ENCODE measurements at regions of chr7 and their contacts with region 1.

Region 1: DNA sequence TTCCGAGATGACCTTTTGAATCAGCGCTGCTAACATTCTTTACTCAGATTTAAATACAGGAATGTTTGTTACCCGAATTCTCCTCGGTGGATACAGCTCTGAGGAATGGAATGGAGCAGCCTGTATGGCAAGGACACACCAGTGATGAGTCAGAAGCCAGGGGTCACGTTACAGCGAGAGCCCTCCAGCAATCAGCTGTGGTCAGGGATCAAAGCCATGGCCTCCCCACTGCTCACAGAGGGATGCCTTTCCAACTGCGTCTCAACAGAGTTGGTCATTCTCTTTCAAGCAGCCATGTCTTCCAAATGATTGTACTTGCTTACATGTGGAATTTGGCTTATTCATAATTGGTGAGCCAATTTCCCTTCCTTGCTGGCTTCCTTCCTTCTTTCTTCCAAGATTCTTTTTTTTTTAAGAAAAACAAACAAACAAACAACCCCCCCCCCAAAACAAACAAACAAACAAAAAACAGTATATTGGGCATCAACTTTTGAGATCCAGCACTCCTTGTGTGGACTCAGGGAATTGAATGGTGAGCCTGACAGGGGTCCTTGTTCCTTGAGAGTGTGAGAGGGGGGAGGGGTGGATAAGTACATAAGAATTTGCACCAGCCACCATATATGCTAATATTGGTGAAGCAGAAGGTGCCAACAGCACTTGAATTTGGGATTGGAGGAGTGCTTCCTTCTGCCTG is 100.2 kb downstream of the ATXN7L1 start:
- DNase-seq: peak; percentile 100
- ATAC-seq: peak; percentile 99
- H3K4me3 ChIP-seq: no peak overlapping the region
- H3K27ac ChIP-seq: peak overlapping the region; percentile 84
- H3K4me1 ChIP-seq: peaks cover 22% of the 10 kb centered on the region
- H3K27me3 ChIP-seq: no peaks in the 10 kb centered on the region
- CTCF ChIP-seq: no peak
- POLR2A ChIP-seq: no peak
- RAD21 ChIP-seq: no peak; the same call in 1 of the 2 replicates

Region 2: DNA sequence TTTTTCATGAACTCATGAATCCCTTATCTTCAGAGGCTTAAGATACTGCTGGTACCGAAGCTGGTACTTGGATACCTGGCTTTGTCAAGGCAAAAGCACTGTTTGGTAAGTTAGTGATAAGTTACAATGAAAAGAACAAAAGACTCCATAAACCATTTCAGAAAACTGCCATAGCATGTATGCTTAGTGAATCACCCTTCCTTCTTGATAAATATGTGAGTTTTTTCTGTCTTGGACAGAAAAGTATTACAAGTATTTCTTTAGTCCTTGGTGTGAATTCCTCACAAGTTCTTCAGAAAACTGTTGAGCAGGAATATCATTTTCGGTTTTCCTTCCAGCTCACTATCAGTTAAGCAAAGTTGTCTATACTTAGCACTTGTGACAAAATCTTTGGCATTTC is 279.7 kb before region 1 on chr7:
- CTCF ChIA-PET with region 1: no interaction called
- POLR2A ChIA-PET with region 1: no interaction called
- dilution Hi-C with region 1: no loop called
- in situ Hi-C with region 1: no loop called
- intact Hi-C with region 1: no loop called
- DNase-seq: peak; percentile 71
- ATAC-seq: peak; percentile 46
- H3K4me3 ChIP-seq: peak overlapping the region; percentile 5; the same call in 1 of the 2 replicates
- H3K27ac ChIP-seq: peak overlapping the region; percentile 44; the same call in 1 of the 2 replicates
- H3K4me1 ChIP-seq: peaks cover 19% of the 10 kb centered on the region
- H3K27me3 ChIP-seq: no peaks in the 10 kb centered on the region
- CTCF ChIP-seq: no peak
- POLR2A ChIP-seq: no peak
- RAD21 ChIP-seq: no peak

Region 3: GRCh38 chr7:105795390-105795729 is 19.2 kb after region 1 on chr7:
- CTCF ChIA-PET with region 1: no interaction called
- POLR2A ChIA-PET with region 1: no interaction called
- dilution Hi-C with region 1: no loop called
- in situ Hi-C with region 1: no loop called
- intact Hi-C with region 1: loop called (anchors 2 kb)
- DNase-seq: peak; percentile 84
- ATAC-seq: peak; percentile 45
- H3K4me3 ChIP-seq: no peak overlapping the region
- H3K27ac ChIP-seq: peak overlapping the region; percentile 61; the same call in 1 of the 2 replicates
- H3K4me1 ChIP-seq: peaks cover 25% of the 10 kb centered on the region
- H3K27me3 ChIP-seq: no peaks in the 10 kb centered on the region
- CTCF ChIP-seq: no peak
- POLR2A ChIP-seq: no peak
- RAD21 ChIP-seq: no peak

Region 4: GRCh38 chr7:105830391-105831301 is 54.4 kb after region 1 on chr7:
- CTCF ChIA-PET with region 1: no interaction called
- POLR2A ChIA-PET with region 1: no interaction called
- dilution Hi-C with region 1: no loop called
- in situ Hi-C with region 1: no loop called
- intact Hi-C with region 1: loop called (anchors 1 kb)
- DNase-seq: peak; percentile 98
- ATAC-seq: peak; percentile 89
- H3K4me3 ChIP-seq: no peak overlapping the region
- H3K27ac ChIP-seq: peak overlapping the region; percentile 92
- H3K4me1 ChIP-seq: peaks cover 28% of the 10 kb centered on the region
- H3K27me3 ChIP-seq: no peaks in the 10 kb centered on the region
- CTCF ChIP-seq: no peak
- POLR2A ChIP-seq: no peak
- RAD21 ChIP-seq: no peak

Region 5: DNA sequence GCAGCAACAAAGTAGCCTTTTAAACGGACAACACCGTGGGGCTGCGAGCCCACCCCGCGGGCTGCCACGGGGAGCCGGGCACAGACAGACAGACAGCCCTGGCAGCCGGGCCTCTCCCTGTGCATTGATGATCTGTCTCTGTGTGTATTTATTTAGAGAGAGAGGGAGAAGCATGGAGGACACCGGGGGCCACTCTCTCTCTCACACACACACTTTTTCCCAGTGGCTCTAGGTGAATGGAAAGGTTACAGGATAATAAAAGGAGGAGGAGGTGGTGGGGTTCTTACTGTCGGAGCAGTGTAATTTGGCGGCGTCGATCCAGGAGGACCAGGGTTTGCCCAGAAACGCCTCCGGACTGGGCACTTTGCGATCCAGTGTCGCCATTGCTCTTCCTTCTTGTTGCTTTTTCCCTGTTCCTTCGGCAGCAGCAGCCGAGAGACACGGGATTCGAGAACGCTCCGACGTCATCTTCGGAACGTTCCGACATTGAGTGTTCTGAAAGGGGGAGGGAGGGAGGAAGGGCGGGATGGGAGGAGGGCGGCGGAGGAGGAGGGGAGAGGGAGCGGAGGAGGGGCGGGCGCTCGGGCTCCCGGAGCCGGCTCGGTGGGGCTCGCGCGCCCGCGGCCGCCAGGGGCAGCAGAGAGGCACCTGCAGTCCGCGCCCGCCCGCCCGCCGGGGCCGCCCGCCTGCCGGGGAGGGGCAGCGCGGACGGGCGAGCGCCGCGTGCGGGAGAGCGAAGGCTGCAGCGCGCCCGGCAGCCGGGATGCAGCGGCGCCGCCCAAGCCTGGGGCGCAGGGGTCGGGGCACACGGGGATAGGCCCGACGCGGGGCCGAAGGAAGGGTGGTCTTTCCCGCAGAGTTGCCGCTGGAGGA is 100.1 kb after region 1 on chr7 and contains the start of gene ATXN7L1:
- CTCF ChIA-PET with region 1: no interaction called
- POLR2A ChIA-PET with region 1: no interaction called
- dilution Hi-C with region 1: no loop called
- in situ Hi-C with region 1: no loop called
- intact Hi-C with region 1: loop called (anchors 5 kb)
- DNase-seq: peak; percentile 98
- ATAC-seq: peak; percentile 97
- H3K4me3 ChIP-seq: peak within 1 kb of the TSS; percentile 82
- H3K27ac ChIP-seq: peak within 1 kb of the TSS; percentile 91
- H3K4me1 ChIP-seq: peaks cover 9% of the 10 kb centered on the region; the same call in 1 of the 2 replicates
- H3K27me3 ChIP-seq: no peaks in the 10 kb centered on the region
- CTCF ChIP-seq: peak; percentile 72
- POLR2A ChIP-seq: peak; percentile 87
- RAD21 ChIP-seq: peak; percentile 49
- total RNA-seq, gene ATXN7L1: 4.3 and 4.7 TPM in 2 replicates